Activated T-helper 2 cell treated with anti-CD3 and anti-CD28 coated beads, Interferon-gamma antibody, Interleukin-2, Interleukin-4, amounts not matched to agents 10 μg/mL and 5 μg/mL and 100 μg/mL, durations not matched to agents 14 hours and 24 hours and 36 hours (primary cell): ENCODE measurements at regions of chr6 and their contacts with region 1.

Region 1: GRCh38 chr6:63571881-63572732 is at the starts of genes LOC128125822 and PTP4A1:
- DNase-seq: peak; percentile 96
- H3K4me3 Mint-ChIP-seq: peak within 1 kb of the TSS; percentile 97
- H3K27ac Mint-ChIP-seq: peak within 1 kb of the TSS; percentile 94
- H3K4me1 Mint-ChIP-seq: peaks cover 37% of the 10 kb centered on the region
- H3K27me3 Mint-ChIP-seq: no peaks in the 10 kb centered on the region
- total RNA-seq, gene PTP4A1: 80.8 and 88.8 TPM in 2 replicates

Region 2: DNA sequence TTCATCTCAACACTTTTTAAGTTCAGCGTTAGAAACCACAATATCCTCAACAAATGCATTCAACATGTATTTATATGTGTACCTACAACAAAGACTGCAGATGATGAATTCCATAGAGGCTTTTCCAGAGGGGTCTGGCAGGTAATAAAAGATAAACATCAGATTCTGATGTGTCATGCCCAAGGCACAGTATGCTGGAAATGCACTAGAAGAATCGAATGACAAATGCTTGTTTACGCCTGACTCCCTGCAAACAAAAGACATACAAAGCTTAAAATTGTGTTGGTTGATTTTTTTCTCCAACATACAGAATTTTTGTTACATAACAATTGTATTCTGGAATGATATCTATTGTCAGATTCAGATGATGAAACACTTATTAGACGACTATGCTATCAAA is 252.2 kb before region 1 on chr6 and contains the start of gene LGSN:
- intact Hi-C with region 1: no loop called
- DNase-seq: no peak
- H3K4me3 Mint-ChIP-seq: no peak within 1 kb of the TSS
- H3K27ac Mint-ChIP-seq: no peak within 1 kb of the TSS
- H3K4me1 Mint-ChIP-seq: no peaks in the 10 kb centered on the region
- H3K27me3 Mint-ChIP-seq: no peaks in the 10 kb centered on the region
- total RNA-seq, gene LGSN: not detected in 2 replicates

Region 3: DNA sequence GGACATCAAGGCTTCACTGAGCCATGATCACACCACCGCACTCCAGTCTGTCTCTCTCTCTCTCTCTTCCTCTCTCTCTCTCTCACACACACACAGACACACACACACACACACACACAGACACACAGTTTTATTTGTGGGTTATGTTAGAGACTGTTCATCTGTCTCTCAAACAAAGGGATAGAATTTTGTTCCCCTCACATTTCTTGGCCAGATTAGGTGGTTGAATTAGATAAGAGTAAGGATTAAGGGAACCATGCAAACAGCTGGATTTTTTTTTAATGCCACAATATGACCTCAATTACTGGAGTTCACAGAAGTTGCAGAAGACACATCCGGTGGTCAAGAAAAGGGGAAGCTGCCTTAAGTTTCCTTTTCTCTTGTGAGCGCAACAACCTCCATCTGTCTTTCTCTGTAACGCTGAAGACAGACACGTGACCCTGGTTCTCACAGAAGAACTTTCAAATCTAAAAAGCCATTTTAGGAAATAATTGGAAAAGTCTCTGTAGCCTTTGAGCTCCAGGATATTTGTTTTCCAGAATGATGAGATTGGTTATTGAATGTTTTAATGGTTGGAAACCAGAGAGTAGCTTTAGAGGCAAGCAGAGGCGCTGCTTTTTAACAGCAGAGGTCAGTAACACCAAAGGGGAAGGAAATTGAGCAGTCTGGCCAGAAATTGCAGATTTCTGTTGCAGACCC is 219.4 kb before region 1 on chr6:
- intact Hi-C with region 1: loop called (anchors 2 kb)
- DNase-seq: no peak
- H3K4me3 Mint-ChIP-seq: peak overlapping the region; percentile 47
- H3K27ac Mint-ChIP-seq: no peak overlapping the region
- H3K4me1 Mint-ChIP-seq: peaks cover 13% of the 10 kb centered on the region
- H3K27me3 Mint-ChIP-seq: peaks cover 5% of the 10 kb centered on the region

Region 4: DNA sequence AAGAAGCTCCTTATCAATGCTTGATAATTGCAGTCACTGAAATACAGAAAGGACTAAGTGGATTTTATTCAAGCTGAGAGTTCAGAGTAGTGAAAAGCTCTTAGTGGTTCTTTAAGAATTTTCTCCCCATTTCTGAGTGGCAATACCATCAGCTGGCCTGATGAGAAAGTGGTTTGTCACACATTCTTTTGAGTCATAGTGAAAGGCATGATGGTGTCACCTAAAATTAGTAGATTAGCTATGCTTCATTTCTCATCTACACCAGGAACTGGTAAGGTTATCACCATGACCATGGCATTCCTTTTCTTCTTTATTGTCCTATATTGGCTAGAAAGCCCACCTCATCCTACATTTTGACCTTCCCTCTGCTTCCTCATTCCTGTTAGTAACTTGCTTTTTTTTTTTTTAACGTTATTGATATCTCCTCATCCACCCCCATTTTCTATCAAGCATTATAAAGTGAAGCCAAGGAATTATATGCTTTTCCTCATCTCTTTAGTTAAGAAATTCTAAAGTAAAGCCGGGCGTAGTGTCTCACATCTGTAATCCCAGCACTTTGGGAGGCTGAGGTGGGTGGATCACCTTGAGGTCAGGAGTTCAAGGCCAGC is 67.2 kb before region 1 on chr6:
- intact Hi-C with region 1: loop called (anchors 2 kb)
- DNase-seq: no peak
- H3K4me3 Mint-ChIP-seq: no peak overlapping the region
- H3K27ac Mint-ChIP-seq: no peak overlapping the region
- H3K4me1 Mint-ChIP-seq: peaks cover 8% of the 10 kb centered on the region
- H3K27me3 Mint-ChIP-seq: peaks cover 14% of the 10 kb centered on the region

Region 5: GRCh38 chr6:63521475-63522210 is 50.5 kb before region 1 on chr6:
- intact Hi-C with region 1: loop called (anchors 1 kb)
- DNase-seq: no peak
- H3K4me3 Mint-ChIP-seq: no peak overlapping the region
- H3K27ac Mint-ChIP-seq: no peak overlapping the region
- H3K4me1 Mint-ChIP-seq: peaks cover 35% of the 10 kb centered on the region
- H3K27me3 Mint-ChIP-seq: no peaks in the 10 kb centered on the region

Region 6: DNA sequence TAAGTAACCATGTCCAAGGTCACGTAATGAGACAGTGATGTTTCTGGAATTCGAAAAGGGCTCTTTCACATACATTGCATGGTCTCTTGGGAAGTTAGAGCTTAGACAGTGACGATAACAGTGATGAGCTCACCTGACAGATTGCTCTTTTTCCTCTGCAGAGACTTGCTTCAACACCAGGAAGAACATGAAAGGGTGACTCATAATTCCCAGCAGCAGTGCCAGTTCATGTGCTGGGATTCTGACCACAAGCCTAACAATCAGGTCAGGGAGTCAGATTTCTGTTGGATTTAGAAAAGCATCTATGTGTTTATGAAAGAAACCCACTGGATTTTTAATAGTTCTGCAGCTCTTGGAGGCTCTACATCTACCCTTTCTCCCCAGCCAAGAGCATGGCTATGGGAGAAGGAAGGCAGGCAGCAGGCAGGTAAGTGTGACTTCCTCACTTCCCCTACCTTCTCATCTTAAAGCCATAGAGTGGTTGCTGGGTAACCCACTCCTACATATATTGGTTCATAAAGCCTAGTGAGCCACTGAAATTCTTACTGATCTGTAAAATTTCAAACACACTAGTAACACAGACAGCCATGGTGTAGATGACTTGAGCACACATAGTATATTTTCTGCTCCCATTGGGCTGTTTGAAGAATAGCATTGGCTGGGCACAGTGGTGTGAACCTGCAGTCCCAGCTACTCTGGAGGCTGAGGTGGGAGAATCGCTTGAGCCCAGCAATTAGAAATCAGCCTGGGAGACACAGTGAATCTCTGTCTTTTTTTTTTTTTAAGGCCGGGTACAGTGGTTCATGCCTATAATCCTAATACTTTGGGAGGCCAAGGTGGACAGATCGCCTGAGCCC is 44.2 kb before region 1 on chr6:
- intact Hi-C with region 1: loop called (anchors 1 kb)
- DNase-seq: no peak
- H3K4me3 Mint-ChIP-seq: no peak overlapping the region
- H3K27ac Mint-ChIP-seq: peak overlapping the region; percentile 62
- H3K4me1 Mint-ChIP-seq: peaks cover 49% of the 10 kb centered on the region
- H3K27me3 Mint-ChIP-seq: no peaks in the 10 kb centered on the region

Region 7: DNA sequence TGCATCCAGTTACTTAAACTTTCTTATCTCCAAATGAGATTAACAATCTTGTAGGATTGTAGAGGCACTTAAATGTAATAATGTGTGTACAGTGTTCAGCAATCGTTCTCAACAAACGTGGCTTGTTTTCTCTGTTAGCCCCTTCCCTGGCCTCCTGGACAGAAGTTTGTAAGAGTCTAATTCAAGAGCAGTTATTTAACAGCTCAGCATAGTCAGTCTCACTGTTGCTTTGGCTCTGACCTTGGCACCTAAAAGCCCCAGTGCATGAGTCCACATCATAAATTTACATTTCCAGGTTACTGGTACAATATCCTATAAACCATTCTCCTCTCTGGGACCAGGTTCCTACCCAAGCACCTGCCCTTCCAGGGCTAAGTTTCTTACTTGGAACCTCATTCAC is 52.0 kb after region 1 on chr6:
- intact Hi-C with region 1: no loop called
- DNase-seq: no peak
- H3K4me3 Mint-ChIP-seq: no peak overlapping the region
- H3K27ac Mint-ChIP-seq: no peak overlapping the region
- H3K4me1 Mint-ChIP-seq: no peaks in the 10 kb centered on the region
- H3K27me3 Mint-ChIP-seq: peaks cover 30% of the 10 kb centered on the region

Region 8: GRCh38 chr6:63635588-63636517 is 63.7 kb after region 1 on chr6 and contains the start of gene PHF3:
- intact Hi-C with region 1: loop called (anchors 1 kb)
- DNase-seq: peak; percentile 88
- H3K4me3 Mint-ChIP-seq: peak within 1 kb of the TSS; percentile 100
- H3K27ac Mint-ChIP-seq: peak within 1 kb of the TSS; percentile 99
- H3K4me1 Mint-ChIP-seq: peaks cover 40% of the 10 kb centered on the region
- H3K27me3 Mint-ChIP-seq: peaks cover under 1% of the 10 kb centered on the region
- total RNA-seq, gene PHF3: 44.6 and 44.7 TPM in 2 replicates

Region 9: DNA sequence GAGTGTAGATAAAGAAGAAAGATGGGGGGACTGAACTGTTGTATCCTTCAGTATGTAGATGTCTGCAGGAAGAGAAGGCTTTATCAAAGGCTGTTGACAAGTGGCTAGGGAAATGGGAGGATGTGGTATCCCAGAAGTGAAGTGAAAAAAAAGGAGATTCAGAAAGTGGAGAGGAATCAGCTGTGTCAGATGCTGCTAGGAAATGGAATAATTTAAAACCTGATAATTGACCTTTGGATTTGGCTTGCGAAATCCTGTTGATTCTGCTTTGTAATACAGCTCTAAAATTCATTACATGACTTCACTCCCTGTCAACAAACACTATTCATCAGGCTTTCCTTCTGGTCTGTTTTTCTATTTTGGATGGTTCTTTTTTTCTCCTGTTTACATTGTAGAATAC is 105.2 kb after region 1 on chr6:
- intact Hi-C with region 1: no loop called
- DNase-seq: no peak
- H3K4me3 Mint-ChIP-seq: no peak overlapping the region
- H3K27ac Mint-ChIP-seq: no peak overlapping the region
- H3K4me1 Mint-ChIP-seq: peaks cover 3% of the 10 kb centered on the region
- H3K27me3 Mint-ChIP-seq: no peaks in the 10 kb centered on the region